ENCODE measurements at regions of chr12 and their contacts with region 1.

Region 1: DNA sequence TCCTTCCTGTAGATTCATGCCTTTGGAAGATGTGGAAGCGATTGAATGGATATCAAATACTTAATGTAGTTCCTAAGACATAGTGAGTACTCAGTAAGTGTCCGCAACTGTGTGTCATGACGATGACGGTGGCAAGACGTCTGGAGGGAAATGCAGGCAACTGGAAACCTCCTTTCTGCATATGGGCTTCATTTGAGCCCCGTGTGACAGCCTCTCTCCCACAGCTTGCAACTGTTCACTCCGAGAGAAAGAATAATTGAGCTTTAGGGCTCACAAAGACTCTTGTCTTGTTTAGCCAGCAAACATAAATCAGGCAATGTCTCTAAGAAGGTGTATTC is 6.9 kb downstream of the CFAP251 start:
- DNase-seq: no peak
- ATAC-seq: peak; percentile 22

Region 2: DNA sequence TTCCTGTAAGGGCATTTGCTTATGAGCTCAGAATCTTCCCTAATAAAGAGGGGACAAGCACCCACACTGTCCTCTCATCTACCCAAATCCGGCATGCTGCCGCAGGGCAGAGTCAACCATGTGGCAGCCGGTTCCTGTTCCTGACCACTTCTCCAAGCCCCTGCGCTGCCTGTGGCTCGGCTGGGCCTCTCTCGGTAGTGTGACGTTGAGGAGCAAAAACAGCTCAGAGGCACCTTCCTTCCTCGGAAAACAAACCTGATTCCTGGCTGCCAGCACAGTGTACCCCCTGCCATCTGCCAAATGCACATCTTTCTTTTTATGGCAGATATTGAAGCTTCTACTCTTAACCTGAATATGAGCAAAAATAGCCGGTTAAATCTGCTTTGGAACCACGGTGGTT is 43.5 kb after region 1 on chr12:
- intact Hi-C with region 1: no loop called
- DNase-seq: peak; percentile 53
- ATAC-seq: no peak

Region 3: GRCh38 chr12:122021193-122021821 is 96.0 kb after region 1 on chr12:
- intact Hi-C with region 1: no loop called
- DNase-seq: peak; percentile 60
- ATAC-seq: peak; percentile 5

Region 4: DNA sequence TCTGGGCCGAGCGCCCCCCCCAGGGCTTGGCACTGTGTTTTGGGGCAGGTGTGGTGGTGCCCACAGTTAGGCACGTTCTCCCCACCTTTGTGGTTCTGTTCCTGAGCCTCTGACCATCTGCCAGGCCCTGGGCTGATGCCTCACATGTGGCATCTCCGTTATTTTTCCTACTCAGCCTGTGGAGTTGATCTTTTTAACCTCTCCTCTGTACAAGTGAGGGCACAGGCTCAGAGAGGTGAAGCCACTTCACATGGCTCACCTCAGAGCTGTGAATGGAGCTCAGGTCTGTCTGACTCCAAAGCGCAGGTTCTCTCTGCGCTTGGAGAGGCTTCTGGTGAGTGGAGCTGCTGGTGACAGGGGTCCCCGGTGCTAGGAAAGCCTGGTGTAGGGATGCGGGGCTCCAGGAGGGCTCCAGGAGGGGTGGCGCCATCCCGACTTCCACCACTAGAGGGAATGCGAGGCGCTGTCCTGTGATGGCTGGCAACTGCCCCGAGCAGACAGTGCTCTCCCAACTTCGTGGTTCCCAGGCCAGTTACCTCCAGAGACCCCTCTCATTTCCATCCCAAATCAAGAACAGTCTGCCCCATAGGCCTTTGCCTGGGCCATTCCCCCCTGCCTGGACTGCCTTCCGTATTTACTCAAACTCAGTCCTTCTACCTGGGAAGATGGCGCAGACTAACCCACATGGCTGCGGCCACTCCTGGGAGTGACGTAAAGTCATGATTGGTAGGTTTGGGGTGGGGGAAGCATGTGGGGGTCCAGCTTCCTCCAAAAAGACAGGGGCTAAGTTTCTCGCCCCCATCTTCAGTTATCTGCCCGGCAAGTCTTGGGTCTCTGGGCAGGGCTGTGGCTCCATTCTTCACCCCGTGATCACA is 106.3 kb after region 1 on chr12:
- intact Hi-C with region 1: loop called (anchors 10 kb)
- DNase-seq: peak; percentile 63
- ATAC-seq: peak; percentile 45

Region 5: GRCh38 chr12:122123051-122123760 is 197.9 kb after region 1 on chr12:
- intact Hi-C with region 1: loop called (anchors 10 kb)
- DNase-seq: no peak
- ATAC-seq: peak; percentile 67